CD8-positive, alpha-beta T cell (primary cell): ENCODE measurements at regions of chr18 and their contacts with region 1.

Region 1: GRCh38 chr18:54696592-54697293 is 105.7 kb downstream of the DYNAP start:
- DNase-seq: no peak
- ATAC-seq: no peak
- H3K4me3 ChIP-seq: no peak overlapping the region
- H3K4me3 Mint-ChIP-seq: no peak overlapping the region
- H3K27ac ChIP-seq: no peak overlapping the region
- H3K27ac Mint-ChIP-seq: no peak overlapping the region
- H3K4me1 ChIP-seq: no peaks in the 10 kb centered on the region
- H3K4me1 Mint-ChIP-seq: no peaks in the 10 kb centered on the region
- H3K27me3 ChIP-seq: no peaks in the 10 kb centered on the region
- H3K27me3 Mint-ChIP-seq: peaks cover 4% of the 10 kb centered on the region
- CTCF ChIP-seq: no peak

Region 2: GRCh38 chr18:54749291-54749690 is 52.5 kb after region 1 on chr18:
- CTCF ChIA-PET with region 1: no interaction called
- POLR2A ChIA-PET with region 1: no interaction called
- intact Hi-C with region 1: loop called in 1 of 2 experiments (anchors 5 kb)
- DNase-seq: no peak
- ATAC-seq: no peak
- H3K4me3 ChIP-seq: no peak overlapping the region
- H3K4me3 Mint-ChIP-seq: no peak overlapping the region
- H3K27ac ChIP-seq: no peak overlapping the region
- H3K27ac Mint-ChIP-seq: no peak overlapping the region
- H3K4me1 ChIP-seq: no peaks in the 10 kb centered on the region
- H3K4me1 Mint-ChIP-seq: no peaks in the 10 kb centered on the region
- H3K27me3 ChIP-seq: no peaks in the 10 kb centered on the region
- H3K27me3 Mint-ChIP-seq: peaks cover 2% of the 10 kb centered on the region
- CTCF ChIP-seq: no peak